ENCODE measurements at regions of chr12 and their contacts with region 1.

Region 1: GRCh38 chr12:99092100-99092851 is 447.2 kb downstream of the APAF1 start:
- DNase-seq: peak in 4 of 10 donors; percentile 12 to 52 (median 32)
- H3K4me3 ChIP-seq: no peak overlapping the region
- H3K27ac ChIP-seq: peak overlapping the region in 50 of 59 donors; percentile 8 to 84 (median 56)
- H3K27me3 ChIP-seq: no peaks in the 10 kb centered on the region
- CTCF ChIP-seq: no peak

Region 2: DNA sequence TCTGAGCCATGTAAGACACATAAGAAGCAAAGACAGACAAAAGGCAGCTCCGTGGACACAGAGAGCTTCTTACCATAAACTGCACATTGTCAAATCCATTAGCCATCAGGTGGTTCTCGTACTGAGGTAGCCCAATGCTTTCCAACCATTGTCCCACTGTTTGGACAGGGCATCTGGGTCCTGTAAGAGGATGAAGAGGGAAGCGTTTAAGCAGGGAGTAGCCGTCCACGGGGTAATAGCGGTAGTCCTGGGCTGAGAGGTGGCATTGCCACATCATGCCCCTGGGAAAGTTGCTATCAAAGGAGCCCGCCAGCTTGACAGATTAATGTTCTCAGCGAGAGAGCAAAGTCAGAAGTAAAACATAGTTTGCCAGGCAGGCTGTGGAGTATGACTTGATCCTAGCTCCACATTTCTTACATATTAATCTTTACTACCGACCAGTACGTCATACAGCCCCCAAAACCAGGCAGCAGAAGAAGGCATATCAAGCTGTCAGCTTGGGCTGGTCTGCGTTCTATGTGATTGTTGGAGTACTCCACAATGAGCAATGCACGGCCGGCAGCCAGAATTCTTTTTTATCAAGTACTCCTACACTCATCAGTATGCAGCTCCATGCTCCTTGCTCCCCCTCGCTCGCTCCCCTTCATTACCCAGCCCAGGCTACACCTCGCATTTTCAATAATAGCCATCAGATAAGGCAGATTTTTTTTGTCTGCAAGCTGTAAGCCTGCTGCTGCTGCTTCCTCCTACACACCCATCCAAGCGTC is 62.1 kb after region 1 on chr12:
- intact Hi-C with region 1: loop called in 1 of 2 experiments (anchors 5 kb)
- DNase-seq: peak in 9 of 10 donors; percentile 39 to 77 (median 59)
- H3K4me3 ChIP-seq: peak overlapping the region; percentile 28 to 71 (median 53)
- H3K27ac ChIP-seq: peak overlapping the region in 57 of 59 donors; percentile 8 to 91 (median 71)
- H3K27me3 ChIP-seq: peaks cover 0 to 4% (median 0%) of the 10 kb centered on the region in 45 donors
- CTCF ChIP-seq: no peak

Measured in dorsolateral prefrontal cortex (tissue), 120 donors.